Vagina (tissue), 2 donors: ENCODE measurements at regions of chr16 and their contacts with region 1.

Region 1: DNA sequence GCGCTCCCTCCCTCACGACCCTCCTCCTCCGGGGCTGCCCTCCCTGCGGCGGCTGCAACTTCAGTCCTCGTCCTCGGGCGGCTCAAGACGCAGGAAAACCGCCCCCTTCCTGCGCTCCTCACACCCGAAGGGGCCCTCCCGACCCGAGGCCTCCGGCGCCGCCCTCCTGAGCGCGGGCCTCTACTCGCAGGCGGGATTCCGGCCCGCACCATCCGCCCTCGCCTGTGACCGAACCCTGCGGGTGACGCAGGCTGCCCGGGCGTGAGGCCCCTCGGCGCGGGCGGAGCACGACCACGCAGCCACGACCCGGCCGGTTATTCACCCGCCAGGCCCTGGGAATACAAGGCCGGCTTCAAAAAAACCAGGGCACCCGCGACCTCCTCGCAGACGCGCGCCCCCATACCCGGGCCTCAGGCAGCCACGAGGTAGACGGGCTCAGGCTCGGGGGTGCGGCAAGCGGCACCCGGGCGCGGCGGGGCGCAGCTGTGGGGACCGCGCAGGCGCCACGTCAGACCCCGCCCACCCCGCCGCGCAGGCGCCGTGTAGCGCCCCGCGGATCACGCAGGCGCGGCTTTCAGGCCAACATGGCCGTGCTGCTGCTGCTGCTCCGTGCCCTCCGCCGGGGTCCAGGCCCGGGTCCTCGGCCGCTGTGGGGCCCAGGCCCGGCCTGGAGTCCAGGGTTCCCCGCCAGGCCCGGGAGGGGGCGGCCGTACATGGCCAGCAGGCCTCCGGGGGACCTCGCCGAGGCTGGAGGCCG is at the start of gene SPG7:
- DNase-seq: no peak
- H3K4me3 ChIP-seq: peak within 1 kb of the TSS; percentile 81 to 98
- H3K27ac ChIP-seq: peak within 1 kb of the TSS; percentile 85
- H3K4me1 ChIP-seq: peaks cover 46% of the 10 kb centered on the region
- H3K27me3 ChIP-seq: no peaks in the 10 kb centered on the region
- CTCF ChIP-seq: no peak
- POLR2A ChIP-seq: peak in 1 of 2 donors; percentile 87
- total RNA-seq, gene SPG7: 119 TPM

Region 2: GRCh38 chr16:89319883-89320781 is 187.9 kb before region 1 on chr16:
- intact Hi-C with region 1: loop called (anchors 5 kb)
- DNase-seq: no peak
- H3K4me3 ChIP-seq: peak overlapping the region; percentile 4 to 42
- H3K27ac ChIP-seq: peak overlapping the region; percentile 64
- H3K4me1 ChIP-seq: peaks cover 100% of the 10 kb centered on the region
- H3K27me3 ChIP-seq: no peaks in the 10 kb centered on the region
- CTCF ChIP-seq: no peak
- POLR2A ChIP-seq: no peak

Region 3: DNA sequence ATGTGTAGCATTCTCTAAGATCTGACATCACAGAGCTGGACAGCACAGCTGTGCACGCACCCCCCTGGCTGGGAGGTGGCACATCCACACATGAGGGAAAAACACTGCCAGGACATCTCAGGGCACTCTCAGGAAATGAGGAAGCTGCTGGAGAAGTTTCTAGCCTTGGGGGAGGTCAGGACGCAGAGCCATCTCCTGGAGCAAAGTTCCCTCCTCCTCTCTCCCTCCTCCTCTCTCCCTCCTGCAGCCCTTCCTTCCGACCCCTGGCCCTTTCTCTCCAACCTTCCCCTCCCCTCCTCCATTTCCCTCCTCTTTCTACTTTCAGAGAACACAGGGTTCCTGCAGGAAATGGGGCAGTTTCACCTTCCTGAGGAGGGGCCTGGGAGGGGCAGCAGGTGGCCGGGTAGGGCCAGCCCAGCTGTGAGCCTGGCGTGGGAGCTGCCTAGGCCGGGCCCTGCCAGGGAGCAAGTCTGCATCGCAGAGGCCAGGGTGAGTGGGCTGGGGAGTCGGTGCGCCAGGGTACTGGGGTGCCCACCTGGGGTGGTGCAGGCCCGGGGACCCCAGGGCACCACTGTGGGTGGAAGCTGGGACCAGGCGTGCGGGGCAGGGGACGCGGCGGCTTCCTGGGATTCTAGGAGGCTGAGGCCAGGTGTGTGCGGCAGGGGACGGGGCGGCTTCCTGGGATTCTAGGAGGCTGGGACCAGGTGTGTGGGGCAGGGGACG is 105.4 kb after region 1 on chr16 and contains the start of gene DPEP1:
- intact Hi-C with region 1: no loop called
- DNase-seq: no peak
- H3K4me3 ChIP-seq: no peak within 1 kb of the TSS
- H3K27ac ChIP-seq: no peak within 1 kb of the TSS
- H3K4me1 ChIP-seq: no peaks in the 10 kb centered on the region
- H3K27me3 ChIP-seq: no peaks in the 10 kb centered on the region
- CTCF ChIP-seq: no peak
- POLR2A ChIP-seq: no peak
- total RNA-seq, gene DPEP1: not detected